ENCODE measurements at regions of chr2 and their contacts with region 1.

Region 1: DNA sequence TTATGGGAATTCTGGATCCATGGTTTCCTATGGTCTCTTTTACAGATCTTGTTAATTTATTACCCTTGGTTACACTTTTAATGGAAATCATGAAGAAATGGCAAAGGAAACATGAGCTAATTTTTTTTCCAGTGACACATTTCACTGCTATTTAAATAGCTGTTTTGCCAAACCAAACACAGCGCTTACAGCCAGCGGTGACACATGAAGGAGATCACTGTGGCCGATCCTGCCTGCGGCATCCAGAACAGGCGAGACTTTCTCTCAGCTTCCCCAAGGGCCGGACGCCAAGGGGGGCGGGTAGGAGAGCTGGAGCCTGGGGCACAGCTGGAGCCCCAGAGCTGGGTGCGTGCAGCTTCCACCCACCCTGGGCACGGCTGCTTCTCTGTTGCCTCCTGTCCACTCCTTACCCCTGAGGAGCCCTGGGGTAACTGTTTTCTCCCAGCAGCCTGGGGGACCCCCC is 81.4 kb upstream of the PKDCC start:
- DNase-seq: peak; percentile 15 to 92 (median 84)
- H3K4me3 ChIP-seq: peak overlapping the region in 12 of 59 donors; percentile 1 to 28 (median 15)
- H3K27ac ChIP-seq: peak overlapping the region; percentile 41 to 97 (median 92)
- H3K27me3 ChIP-seq: no peaks in the 10 kb centered on the region
- CTCF ChIP-seq: peak in 3 of 56 donors; percentile 11 to 31 (median 22)

Region 2: GRCh38 chr2:41814963-41815362 is 151.5 kb before region 1 on chr2:
- intact Hi-C with region 1: no loop called
- DNase-seq: no peak
- H3K4me3 ChIP-seq: no peak overlapping the region
- H3K27ac ChIP-seq: no peak overlapping the region
- H3K27me3 ChIP-seq: peaks cover 0 to 9% (median 0%) of the 10 kb centered on the region in 45 donors
- CTCF ChIP-seq: no peak

Region 3: GRCh38 chr2:42047488-42048298 is 81.2 kb after region 1 on chr2 and contains the start of gene PKDCC:
- intact Hi-C with region 1: loop called in 1 of 2 experiments (anchors 5 kb)
- DNase-seq: peak in 9 of 10 donors; percentile 36 to 85 (median 72)
- H3K4me3 ChIP-seq: peak within 1 kb of the TSS; percentile 54 to 88 (median 76)
- H3K27ac ChIP-seq: peak within 1 kb of the TSS; percentile 22 to 94 (median 81)
- H3K27me3 ChIP-seq: no peaks in the 10 kb centered on the region
- CTCF ChIP-seq: no peak
- total RNA-seq, gene PKDCC: 26.5 to 91.2 (median 49.3) TPM

Measured in dorsolateral prefrontal cortex (tissue), 120 donors.